Right lobe of liver (tissue), 6 donors: ENCODE measurements at regions of chr13 and their contacts with region 1.

Region 1: GRCh38 chr13:48595431-48596429 is 58.0 kb upstream of the CYSLTR2 start:
- DNase-seq: peak; percentile 49 to 62 (median 60)
- ATAC-seq: peak; percentile 86 to 99 (median 98)
- H3K4me3 ChIP-seq: no peak overlapping the region
- H3K27ac ChIP-seq: no peak overlapping the region
- H3K4me1 ChIP-seq: no peaks in the 10 kb centered on the region
- H3K27me3 ChIP-seq: no peaks in the 10 kb centered on the region
- CTCF ChIP-seq: peak; percentile 61 to 89 (median 74)
- POLR2A ChIP-seq: no peak

Region 2: DNA sequence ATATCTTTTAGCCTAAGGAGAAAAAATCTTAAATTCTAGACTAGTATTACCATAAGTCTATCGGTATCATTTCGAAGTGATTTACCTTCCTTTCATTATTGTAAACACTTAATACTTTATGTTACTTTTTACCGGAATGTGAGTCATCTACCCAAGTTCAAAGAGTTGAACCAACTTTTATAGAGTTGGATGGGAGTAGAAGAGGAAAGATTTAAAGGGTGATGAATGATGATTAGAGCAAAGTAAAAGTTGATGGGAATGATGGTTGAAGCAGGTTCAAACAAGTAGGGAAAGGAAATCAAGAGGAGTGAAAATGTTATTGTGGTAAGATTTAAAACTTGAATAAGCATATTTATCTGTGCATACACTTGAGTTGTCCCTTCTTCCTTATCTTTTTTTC is 171.5 kb before region 1 on chr13:
- intact Hi-C with region 1: no loop called
- DNase-seq: no peak
- ATAC-seq: no peak
- H3K4me3 ChIP-seq: no peak overlapping the region
- H3K27ac ChIP-seq: no peak overlapping the region
- H3K4me1 ChIP-seq: no peaks in the 10 kb centered on the region
- H3K27me3 ChIP-seq: no peaks in the 10 kb centered on the region
- CTCF ChIP-seq: no peak
- POLR2A ChIP-seq: no peak

Region 3: GRCh38 chr13:48769107-48769704 is 173.5 kb after region 1 on chr13:
- intact Hi-C with region 1: loop called (anchors 5 to 10 kb)
- DNase-seq: peak in 2 of 3 donors; percentile 34 to 84
- ATAC-seq: peak; percentile 100
- H3K4me3 ChIP-seq: no peak overlapping the region
- H3K27ac ChIP-seq: no peak overlapping the region
- H3K4me1 ChIP-seq: no peaks in the 10 kb centered on the region
- H3K27me3 ChIP-seq: no peaks in the 10 kb centered on the region
- CTCF ChIP-seq: peak; percentile 97 to 100 (median 98)
- POLR2A ChIP-seq: no peak